CD4-positive, alpha-beta T cell (primary cell): ENCODE measurements at regions of chr19 and their contacts with region 1.

Region 1: GRCh38 chr19:3670796-3671679 is 29.2 kb downstream of the PIP5K1C start:
- DNase-seq: peak in 3 of 14 experiments; percentile 10 to 35 (median 16)
- ATAC-seq: no peak
- H3K4me3 ChIP-seq: peak overlapping the region; percentile 12
- H3K4me3 Mint-ChIP-seq: peak overlapping the region; percentile 68
- H3K27ac ChIP-seq: no peak overlapping the region
- H3K27ac Mint-ChIP-seq: no peak overlapping the region
- H3K4me1 ChIP-seq: peaks cover 22% of the 10 kb centered on the region
- H3K4me1 Mint-ChIP-seq: peaks cover 23% of the 10 kb centered on the region
- H3K27me3 ChIP-seq: no peaks in the 10 kb centered on the region
- H3K27me3 Mint-ChIP-seq: no peaks in the 10 kb centered on the region
- CTCF ChIP-seq: no peak

Region 2: DNA sequence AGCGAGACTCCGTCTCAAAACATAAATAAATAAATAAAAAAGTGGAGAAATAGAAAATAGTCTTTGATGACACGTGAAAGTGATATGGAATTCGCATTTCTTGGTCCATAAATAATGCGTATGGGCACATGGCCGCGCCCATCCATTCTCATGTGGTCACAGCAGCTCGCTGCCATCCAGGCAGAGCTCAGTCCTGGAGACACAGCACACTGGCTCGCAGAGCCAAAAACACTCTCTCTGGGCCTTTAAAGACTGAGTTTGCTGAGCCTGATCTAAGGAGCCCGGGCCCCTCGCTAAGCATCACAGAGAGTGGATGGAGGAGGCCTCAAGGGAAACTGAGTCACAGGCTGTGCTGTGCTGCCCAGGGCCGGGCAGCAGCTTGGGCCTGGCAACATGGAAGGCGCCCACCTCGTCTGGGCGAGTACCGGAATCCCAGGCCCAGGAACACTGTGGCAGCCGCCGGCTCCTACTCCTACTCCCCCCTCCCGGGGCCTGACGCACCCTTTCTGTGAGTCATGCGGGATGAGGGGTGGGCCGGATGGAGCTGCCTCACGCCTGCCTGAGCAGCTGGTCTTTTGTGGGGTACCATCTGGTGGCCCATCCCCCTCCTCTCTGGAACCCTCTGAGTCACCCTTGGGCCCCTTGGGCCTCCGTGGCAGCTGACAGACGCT is 15.5 kb before region 1 on chr19:
- CTCF ChIA-PET with region 1: no interaction called
- POLR2A ChIA-PET with region 1: no interaction called
- intact Hi-C with region 1: no loop called
- DNase-seq: no peak
- ATAC-seq: no peak
- H3K4me3 ChIP-seq: no peak overlapping the region
- H3K4me3 Mint-ChIP-seq: no peak overlapping the region
- H3K27ac ChIP-seq: no peak overlapping the region
- H3K27ac Mint-ChIP-seq: no peak overlapping the region
- H3K4me1 ChIP-seq: no peaks in the 10 kb centered on the region
- H3K4me1 Mint-ChIP-seq: no peaks in the 10 kb centered on the region
- H3K27me3 ChIP-seq: no peaks in the 10 kb centered on the region
- H3K27me3 Mint-ChIP-seq: no peaks in the 10 kb centered on the region
- CTCF ChIP-seq: no peak

Region 3: GRCh38 chr19:3687774-3688706 is 17.0 kb after region 1 on chr19:
- CTCF ChIA-PET with region 1: no interaction called
- POLR2A ChIA-PET with region 1: interaction called, 11 read pairs
- intact Hi-C with region 1: no loop called
- DNase-seq: peak in 12 of 14 experiments; percentile 18 to 69 (median 54)
- ATAC-seq: peak; percentile 71
- H3K4me3 ChIP-seq: peak overlapping the region; percentile 53
- H3K4me3 Mint-ChIP-seq: peak overlapping the region; percentile 94
- H3K27ac ChIP-seq: peak overlapping the region; percentile 58 to 73
- H3K27ac Mint-ChIP-seq: peak overlapping the region; percentile 91
- H3K4me1 ChIP-seq: peaks cover 34% of the 10 kb centered on the region
- H3K4me1 Mint-ChIP-seq: peaks cover 60% of the 10 kb centered on the region
- H3K27me3 ChIP-seq: no peaks in the 10 kb centered on the region
- H3K27me3 Mint-ChIP-seq: no peaks in the 10 kb centered on the region
- CTCF ChIP-seq: no peak